MCF 10A (cell line): ENCODE measurements at regions of chr1 and their contacts with region 1.

Region 1: DNA sequence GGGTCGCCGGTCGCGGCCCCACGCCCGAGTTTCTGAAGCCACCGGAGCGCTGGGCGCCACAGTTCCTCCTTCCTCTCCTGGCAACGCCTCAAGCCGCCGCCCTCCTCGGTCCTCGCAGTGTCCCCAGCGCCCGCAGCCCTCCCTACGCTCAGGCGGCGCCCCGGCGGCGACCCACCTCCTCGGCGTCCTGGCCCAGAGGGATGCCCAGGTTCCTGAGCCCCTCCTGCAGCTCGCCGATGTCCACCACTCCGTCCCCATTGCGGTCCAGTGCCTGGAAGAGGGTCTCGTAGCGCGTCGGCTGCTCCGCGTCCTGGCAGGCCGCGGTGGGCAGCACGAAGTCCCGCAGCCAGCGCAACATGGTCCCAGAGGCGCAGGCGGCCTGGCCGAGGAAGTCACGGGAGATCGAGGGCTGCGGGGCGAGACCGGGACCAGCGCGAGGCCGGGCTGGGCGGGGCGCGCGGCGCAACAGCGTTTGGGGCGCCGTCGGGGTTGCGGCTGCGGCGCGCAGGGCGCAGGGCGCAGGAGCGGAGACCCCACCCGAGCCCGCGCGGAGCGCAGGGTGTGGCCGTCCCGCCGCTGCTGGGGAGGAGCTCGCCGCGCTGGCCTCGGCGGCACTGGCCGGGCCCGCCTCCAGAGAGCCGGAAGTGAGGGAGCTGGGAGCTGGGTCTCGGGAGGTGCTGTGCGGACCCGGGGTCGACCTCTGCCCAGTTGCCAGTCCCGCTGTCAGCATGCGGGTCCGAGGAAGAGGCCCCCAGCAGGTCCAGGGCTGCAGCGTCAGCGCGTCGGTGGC is at the start of gene SLC25A24:
- DNase-seq: peak; percentile 81
- H3K4me3 Mint-ChIP-seq: peak within 1 kb of the TSS; percentile 92
- H3K27ac Mint-ChIP-seq: peak within 1 kb of the TSS; percentile 91
- H3K4me1 Mint-ChIP-seq: peaks cover 27% of the 10 kb centered on the region
- H3K27me3 Mint-ChIP-seq: no peaks in the 10 kb centered on the region
- CTCF ChIP-seq: no peak
- total RNA-seq, gene SLC25A24: 21.0 and 28.3 TPM in 2 replicates

Region 2: DNA sequence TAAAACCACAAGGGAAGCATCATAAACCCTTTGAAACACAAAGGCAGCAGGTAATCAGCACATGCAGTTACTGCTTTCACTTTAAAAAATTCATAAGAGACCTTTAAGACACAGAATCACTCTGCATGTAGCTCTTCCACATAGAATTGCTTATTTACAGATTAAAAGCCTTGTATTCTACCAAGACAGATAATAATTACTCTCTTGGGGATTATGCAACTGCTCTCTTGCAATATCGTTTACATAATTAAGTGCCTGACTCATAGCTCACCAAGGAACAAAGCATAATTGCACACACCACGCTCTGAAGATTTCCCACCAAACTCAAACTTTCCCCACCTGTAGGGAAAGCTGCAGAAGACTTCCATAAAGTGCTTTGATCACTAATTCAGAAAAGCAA is 322.9 kb before region 1 on chr1:
- CTCF ChIA-PET with region 1: no interaction called
- POLR2A ChIA-PET with region 1: interaction called, 5 read pairs
- intact Hi-C with region 1: loop called (anchors 10 kb)
- DNase-seq: peak; percentile 82
- H3K4me3 Mint-ChIP-seq: no peak overlapping the region
- H3K27ac Mint-ChIP-seq: no peak overlapping the region
- H3K4me1 Mint-ChIP-seq: peaks cover 33% of the 10 kb centered on the region
- H3K27me3 Mint-ChIP-seq: no peaks in the 10 kb centered on the region
- CTCF ChIP-seq: no peak

Region 3: DNA sequence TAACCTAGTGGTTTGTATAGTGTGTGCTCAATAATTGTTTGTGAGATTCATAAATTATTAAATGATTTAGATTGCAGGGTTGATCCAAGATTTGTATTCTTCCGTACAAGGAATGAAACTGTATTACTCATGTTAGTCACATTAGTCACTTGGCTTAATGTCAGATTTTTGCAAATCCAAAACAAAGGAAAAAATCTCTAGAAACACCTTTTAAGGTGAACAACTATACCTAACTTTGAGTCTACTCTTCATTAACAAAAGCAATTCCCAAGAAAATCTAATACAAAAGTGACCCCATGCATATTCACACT is 56.9 kb before region 1 on chr1:
- CTCF ChIA-PET with region 1: interaction called, 3 read pairs
- POLR2A ChIA-PET with region 1: interaction called, 10 read pairs
- intact Hi-C with region 1: no loop called
- DNase-seq: peak; percentile 66
- H3K4me3 Mint-ChIP-seq: peak overlapping the region; percentile 60
- H3K27ac Mint-ChIP-seq: peak overlapping the region; percentile 97
- H3K4me1 Mint-ChIP-seq: peaks cover 37% of the 10 kb centered on the region
- H3K27me3 Mint-ChIP-seq: no peaks in the 10 kb centered on the region
- CTCF ChIP-seq: no peak

Region 4: DNA sequence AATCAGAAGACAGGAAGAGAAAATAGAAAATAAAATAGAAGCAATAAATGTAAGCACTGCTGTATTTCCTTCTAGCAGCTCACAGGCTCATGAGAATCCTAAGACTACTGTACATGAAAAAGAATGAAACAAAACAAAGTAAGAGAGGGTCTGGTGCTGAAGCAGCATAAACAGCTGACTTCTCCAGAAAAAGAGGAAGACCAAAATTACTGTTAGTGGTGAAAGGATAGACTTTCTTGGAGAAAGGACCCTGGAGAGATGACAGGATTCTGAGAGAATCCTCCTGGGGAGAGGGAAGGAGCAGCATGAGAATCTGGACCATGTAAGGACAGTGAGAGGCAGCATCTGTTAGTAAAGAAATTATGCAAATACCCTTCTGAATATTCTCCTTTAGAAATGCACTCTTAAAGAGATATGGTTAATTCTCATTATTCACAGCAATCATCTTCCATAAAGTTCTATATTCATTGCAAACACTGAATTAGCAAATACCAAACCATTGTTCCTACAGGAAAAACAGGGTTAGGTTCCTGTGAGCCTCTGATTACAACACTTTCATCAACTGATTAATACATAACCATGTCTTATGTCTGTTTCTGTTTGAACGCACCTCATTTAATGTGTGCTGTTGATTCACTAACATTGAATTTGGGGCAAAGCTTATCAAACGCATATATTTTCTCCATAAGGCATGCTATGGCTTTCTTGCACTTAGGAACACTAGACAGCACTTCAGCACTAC is 16.8 kb before region 1 on chr1:
- CTCF ChIA-PET with region 1: interaction called, 3 read pairs
- POLR2A ChIA-PET with region 1: interaction called, 34 read pairs
- intact Hi-C with region 1: no loop called
- DNase-seq: no peak
- H3K4me3 Mint-ChIP-seq: no peak overlapping the region
- H3K27ac Mint-ChIP-seq: no peak overlapping the region
- H3K4me1 Mint-ChIP-seq: peaks cover 5% of the 10 kb centered on the region
- H3K27me3 Mint-ChIP-seq: no peaks in the 10 kb centered on the region
- CTCF ChIP-seq: no peak

Region 5: DNA sequence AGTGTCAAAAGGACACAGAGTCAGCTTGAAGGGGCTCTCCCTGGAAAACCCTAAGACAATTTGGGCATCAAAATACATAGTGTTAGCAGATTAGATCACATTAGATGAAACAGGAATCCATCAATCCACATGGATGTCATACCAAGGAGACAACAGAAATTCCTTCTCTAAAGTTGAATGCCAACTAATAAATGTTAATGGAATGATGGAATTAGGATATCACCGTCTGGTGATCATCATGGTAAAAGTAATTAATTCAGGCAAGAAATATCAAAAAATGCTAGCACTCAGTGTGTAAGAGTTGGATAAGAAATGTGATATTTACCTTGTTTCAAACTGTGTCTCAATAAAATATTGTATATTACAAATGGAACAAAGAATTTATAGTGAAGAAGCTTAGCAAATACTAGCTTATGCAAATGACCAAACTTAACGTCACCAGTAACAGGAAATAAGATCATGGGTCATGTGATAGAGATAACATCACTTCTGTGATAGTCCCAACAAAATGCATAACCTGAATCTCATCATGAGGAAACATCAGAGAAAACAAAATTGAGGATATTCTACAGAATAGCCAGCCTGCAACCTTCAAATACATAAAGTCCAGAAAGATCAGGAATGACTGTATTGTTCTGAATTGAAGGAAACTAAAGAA is 11.2 kb after region 1 on chr1:
- CTCF ChIA-PET with region 1: interaction called, 4 read pairs
- POLR2A ChIA-PET with region 1: interaction called, 12 read pairs
- intact Hi-C with region 1: no loop called
- DNase-seq: no peak
- H3K4me3 Mint-ChIP-seq: no peak overlapping the region
- H3K27ac Mint-ChIP-seq: no peak overlapping the region
- H3K4me1 Mint-ChIP-seq: no peaks in the 10 kb centered on the region
- H3K27me3 Mint-ChIP-seq: peaks cover 62% of the 10 kb centered on the region
- CTCF ChIP-seq: no peak